Right ventricle myocardium inferior (tissue), 1 donor: ENCODE measurements at regions of chr19 and their contacts with region 1.

Region 1: DNA sequence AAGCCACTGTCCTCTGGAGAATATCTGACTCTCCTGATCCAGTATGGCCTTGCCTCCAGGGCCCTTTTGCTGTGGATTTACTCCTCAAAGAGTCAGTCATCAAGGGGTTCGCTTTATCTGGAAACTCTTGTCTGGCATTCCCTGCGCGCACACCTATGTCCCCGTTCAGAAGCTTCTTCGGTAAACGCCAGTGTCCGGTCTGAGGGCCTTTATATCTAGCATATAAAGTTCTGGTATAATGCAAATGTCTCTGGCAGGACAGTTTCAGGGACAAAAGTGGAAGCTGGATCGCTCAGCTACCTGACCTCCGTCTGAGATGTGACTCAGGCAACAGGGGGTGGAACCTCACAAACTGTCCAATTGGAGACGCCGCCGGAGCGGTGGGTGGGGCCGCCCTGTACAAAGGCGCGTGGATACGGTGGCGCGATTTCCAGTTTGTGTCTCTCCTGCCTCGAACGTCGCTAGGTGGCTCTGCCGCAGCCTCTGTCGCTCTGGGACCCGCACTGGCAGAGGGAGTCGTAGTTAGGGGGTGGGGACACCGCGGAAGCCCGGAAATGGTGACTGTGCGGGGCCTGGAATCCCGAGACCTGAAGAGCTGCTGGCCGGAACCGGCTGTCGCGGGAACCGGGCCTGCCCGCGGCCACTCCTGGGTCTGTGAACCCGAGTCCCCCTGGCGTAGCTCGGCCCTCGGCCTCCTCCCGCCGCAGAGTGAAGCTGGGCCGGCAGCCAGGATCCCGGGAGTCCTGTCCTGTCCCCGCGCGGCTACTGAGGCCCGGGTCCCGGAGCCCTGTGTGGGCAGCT is 10.6 kb upstream of the ZNF709 start:
- DNase-seq: peak; percentile 96
- ATAC-seq: peak; percentile 100

Region 2: DNA sequence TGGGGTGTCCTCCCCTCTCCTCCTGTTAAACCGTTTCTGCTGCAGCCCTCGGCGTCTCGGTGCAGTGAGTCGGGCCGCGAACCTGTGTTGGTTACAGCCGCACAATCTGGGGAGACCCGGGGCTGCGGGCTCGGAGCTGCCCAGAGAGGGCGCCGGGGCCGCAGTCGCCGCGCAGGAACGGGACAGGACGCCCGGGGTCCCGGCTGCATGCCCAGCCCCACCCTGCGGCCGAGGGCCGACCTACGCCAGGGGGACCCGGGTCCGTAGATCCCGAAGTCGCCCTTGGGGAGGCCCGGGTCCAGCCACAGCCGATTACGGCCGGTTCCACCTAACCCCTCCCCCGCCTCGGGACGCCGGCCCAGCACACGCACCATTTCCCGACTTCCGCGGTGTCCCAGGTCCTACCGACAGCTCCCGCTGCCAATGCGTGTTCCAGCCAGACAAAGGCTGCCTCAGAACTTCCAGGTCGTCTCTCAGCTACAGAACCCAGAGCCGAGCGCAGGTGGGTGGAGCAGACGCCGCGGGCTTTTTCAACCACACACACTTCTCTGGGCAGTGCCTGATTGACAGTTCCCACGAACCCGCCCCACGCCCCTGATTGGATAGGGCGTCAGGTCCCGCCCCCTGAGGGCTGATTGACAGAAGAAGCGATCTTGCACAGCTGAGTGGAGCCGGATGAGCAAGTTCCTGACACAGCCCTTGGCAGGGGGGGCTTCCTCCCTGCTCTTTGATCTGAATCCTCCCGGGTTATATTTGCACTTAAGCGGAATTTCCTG is 54.5 kb before region 1 on chr19 and contains the start of gene ZNF443:
- intact Hi-C with region 1: no loop called
- DNase-seq: peak; percentile 98
- ATAC-seq: peak; percentile 100
- total RNA-seq, gene ZNF443: 1.9 TPM

Region 3: GRCh38 chr19:12551060-12551832 is 56.0 kb after region 1 on chr19 and contains the start of gene ZNF564:
- intact Hi-C with region 1: loop called (anchors 5 kb)
- DNase-seq: peak; percentile 95
- ATAC-seq: peak; percentile 99
- total RNA-seq, gene ZNF564: 10.3 TPM